PC-9 (cell line): ENCODE measurements at regions of chr10 and their contacts with region 1.

Region 1: GRCh38 chr10:29998142-29998808 is 61.1 kb downstream of the JCAD start:
- DNase-seq: peak; percentile 61 to 75
- H3K4me3 ChIP-seq: no peak overlapping the region
- H3K27ac ChIP-seq: no peak overlapping the region
- H3K4me1 ChIP-seq: peaks cover 42% of the 10 kb centered on the region
- H3K27me3 ChIP-seq: no peaks in the 10 kb centered on the region
- CTCF ChIP-seq: peak; percentile 92

Region 2: DNA sequence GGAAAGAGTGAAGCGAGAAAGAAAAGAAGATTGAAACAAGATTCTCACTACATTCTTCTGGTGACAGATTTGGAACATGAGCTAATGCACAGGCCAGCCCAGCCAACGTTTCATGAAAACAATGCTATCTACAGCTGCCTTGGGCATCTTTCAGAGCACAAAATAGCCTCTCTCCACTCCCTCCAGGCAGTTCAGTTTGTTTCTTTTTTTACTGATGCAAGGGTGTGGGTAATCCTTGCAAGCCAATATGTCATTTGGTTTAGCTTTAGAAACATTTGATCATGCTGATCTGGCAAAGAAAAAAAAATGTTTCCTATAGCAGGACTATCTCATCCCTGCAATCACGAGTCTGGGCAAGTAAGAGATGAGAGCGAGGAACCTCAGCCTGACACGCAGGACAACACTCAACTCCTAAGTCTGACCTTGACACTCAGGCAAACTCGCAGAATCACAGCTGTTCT is 399.4 kb before region 1 on chr10:
- CTCF ChIA-PET with region 1: no interaction called
- POLR2A ChIA-PET with region 1: no interaction called
- intact Hi-C with region 1: loop called (anchors 5 kb)
- DNase-seq: no peak
- H3K4me3 ChIP-seq: no peak overlapping the region
- H3K27ac ChIP-seq: no peak overlapping the region
- H3K4me1 ChIP-seq: no peaks in the 10 kb centered on the region
- H3K27me3 ChIP-seq: no peaks in the 10 kb centered on the region
- CTCF ChIP-seq: no peak

Region 3: DNA sequence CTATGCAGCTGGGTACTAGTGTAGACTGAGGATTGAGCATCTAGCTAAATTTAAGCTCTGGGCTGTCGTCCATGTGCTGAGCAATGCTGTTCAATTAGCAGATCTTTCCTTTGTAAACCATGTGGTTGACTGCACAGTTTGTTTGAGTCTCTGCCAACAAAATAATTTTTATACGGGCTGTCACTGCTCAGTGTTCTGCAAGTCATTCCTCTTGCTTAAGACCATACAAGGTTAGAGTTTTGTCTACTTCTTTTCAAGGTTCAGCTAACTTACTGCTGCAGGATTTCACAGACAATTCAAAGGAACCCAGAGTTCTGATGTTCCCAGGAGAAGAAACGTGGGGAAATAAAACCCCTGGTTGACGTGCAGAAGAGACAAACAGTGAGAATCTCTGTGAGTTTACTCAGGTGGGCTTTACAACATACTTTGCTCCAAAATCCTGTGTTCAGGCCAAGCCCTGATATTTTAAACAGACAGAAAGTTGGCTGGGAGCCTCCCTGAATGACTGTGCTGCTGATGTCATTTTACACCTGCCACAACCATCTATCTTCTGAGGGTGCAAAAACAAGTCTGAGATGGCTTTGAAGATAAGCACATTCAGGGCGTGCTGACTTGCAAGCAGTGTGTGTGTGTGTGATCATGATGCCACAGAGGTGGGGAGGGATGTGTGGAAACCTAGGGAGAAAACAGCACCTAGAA is 186.4 kb before region 1 on chr10:
- CTCF ChIA-PET with region 1: no interaction called
- POLR2A ChIA-PET with region 1: no interaction called
- intact Hi-C with region 1: loop called (anchors 2 kb)
- DNase-seq: peak; percentile 78 to 94
- H3K4me3 ChIP-seq: peak overlapping the region; percentile 33; the same call in 1 of the 2 replicates
- H3K27ac ChIP-seq: peak overlapping the region; percentile 99
- H3K4me1 ChIP-seq: peaks cover 58% of the 10 kb centered on the region
- H3K27me3 ChIP-seq: no peaks in the 10 kb centered on the region
- CTCF ChIP-seq: no peak

Region 4: GRCh38 chr10:30151581-30152389 is 153.5 kb after region 1 on chr10:
- CTCF ChIA-PET with region 1: no interaction called
- POLR2A ChIA-PET with region 1: no interaction called
- intact Hi-C with region 1: loop called (anchors 1 kb)
- DNase-seq: peak; percentile 80 to 84
- H3K4me3 ChIP-seq: no peak overlapping the region
- H3K27ac ChIP-seq: no peak overlapping the region
- H3K4me1 ChIP-seq: peaks cover 11% of the 10 kb centered on the region
- H3K27me3 ChIP-seq: no peaks in the 10 kb centered on the region
- CTCF ChIP-seq: no peak; the same call in 1 of the 2 replicates

Region 5: DNA sequence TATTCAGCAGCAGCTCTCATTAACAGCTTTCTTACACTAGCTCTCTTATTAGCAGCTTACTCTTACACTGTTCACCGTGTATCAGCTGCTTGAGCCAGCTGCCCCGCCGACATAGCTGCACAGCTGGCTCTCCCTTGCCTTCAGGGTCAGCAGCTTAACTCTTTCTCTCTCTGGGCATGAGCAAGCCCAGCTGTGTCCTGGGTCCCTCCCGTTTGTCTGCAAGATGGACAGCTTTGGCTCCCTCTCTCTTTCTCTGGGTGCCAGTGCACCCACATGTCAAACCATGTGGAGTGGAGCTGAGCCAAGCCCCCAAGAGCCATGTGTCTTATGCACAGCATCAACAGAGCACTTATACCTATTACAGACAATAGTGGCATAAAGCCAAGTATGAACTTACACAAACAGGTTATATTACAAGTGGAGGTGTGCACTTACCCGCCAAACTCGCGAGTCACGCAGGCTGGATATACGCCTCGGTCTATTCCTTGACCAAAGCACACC is 386.5 kb after region 1 on chr10:
- CTCF ChIA-PET with region 1: no interaction called
- POLR2A ChIA-PET with region 1: interaction called, 5 read pairs
- intact Hi-C with region 1: loop called (anchors 10 kb)
- DNase-seq: peak; percentile 11 to 44
- H3K4me3 ChIP-seq: no peak overlapping the region
- H3K27ac ChIP-seq: no peak overlapping the region
- H3K4me1 ChIP-seq: peaks cover 6% of the 10 kb centered on the region; the same call in 1 of the 2 replicates
- H3K27me3 ChIP-seq: no peaks in the 10 kb centered on the region
- CTCF ChIP-seq: peak; percentile 55

Region 6: DNA sequence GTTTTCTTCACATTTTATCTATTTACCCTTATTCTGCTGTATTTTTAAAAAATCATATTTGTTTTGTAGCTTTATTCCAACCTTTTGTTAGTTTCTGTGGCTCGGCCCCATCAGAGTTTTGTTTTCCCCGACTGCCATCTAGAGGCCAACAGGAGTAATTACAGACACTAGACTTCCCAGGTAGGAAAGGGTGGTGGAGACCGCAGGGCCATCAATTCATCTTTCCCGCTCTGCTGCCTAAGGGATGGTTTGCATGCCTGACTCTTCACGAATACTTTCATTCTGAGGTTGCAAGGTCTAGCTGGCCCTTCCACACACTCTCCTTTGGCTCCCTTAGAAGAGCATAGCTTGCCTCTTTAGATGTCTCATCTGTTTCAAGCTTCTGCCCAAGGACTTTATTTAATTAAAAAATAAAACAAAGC is 593.0 kb after region 1 on chr10:
- CTCF ChIA-PET with region 1: no interaction called
- POLR2A ChIA-PET with region 1: no interaction called
- intact Hi-C with region 1: loop called (anchors 5 kb)
- DNase-seq: peak; percentile 33 to 36
- H3K4me3 ChIP-seq: no peak overlapping the region
- H3K27ac ChIP-seq: no peak overlapping the region
- H3K4me1 ChIP-seq: no peaks in the 10 kb centered on the region
- H3K27me3 ChIP-seq: no peaks in the 10 kb centered on the region
- CTCF ChIP-seq: peak; percentile 76